CD8-positive, alpha-beta T cell (primary cell): ENCODE measurements at regions of chr19 and their contacts with region 1.

Region 1: DNA sequence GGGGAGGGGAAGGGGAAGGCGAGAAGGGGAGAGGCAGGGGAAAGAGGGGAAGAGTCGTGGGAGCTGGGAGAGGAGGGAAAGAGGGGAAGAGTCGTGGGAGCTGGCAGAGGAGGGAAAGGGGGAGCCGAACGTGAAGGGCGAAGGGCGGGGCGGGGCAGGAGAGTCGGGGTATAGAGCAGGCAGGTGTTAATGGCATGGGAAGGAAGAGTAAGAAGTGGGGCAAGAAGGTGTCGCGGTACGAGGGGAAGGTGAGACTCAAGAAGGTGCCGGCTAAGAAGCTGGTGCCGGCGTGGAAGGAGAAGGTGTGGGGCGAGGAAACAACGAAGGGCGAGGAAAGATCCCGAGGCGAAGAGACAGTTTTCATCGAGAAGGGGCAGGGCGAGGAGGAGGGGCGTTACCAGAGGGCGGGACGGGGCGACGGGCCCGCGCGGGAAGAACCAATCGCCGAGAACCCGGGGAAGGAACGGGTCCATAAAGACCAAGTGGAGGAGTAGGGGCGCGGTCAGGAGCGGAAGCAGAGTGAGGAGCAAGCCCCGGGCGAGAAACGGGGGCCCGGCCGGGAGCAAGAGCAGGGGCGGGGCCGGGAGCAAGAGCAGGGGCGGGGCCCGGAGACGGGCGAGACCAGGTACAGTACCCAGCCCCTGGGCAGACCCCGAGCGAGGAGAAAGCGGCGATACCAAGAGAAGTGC is 463 bp downstream of the CATSPERG start:
- DNase-seq: peak; percentile 85 to 96 (median 95)
- ATAC-seq: peak; percentile 66
- H3K4me3 ChIP-seq: peak overlapping the region; percentile 85 to 94
- H3K4me3 Mint-ChIP-seq: peak overlapping the region; percentile 89
- H3K27ac ChIP-seq: peak overlapping the region; percentile 84 to 95
- H3K27ac Mint-ChIP-seq: peak overlapping the region; percentile 97
- H3K4me1 ChIP-seq: peaks cover 10% of the 10 kb centered on the region
- H3K4me1 Mint-ChIP-seq: peaks cover 17% of the 10 kb centered on the region
- H3K27me3 ChIP-seq: no peaks in the 10 kb centered on the region
- H3K27me3 Mint-ChIP-seq: no peaks in the 10 kb centered on the region
- CTCF ChIP-seq: no peak

Region 2: GRCh38 chr19:38049105-38049649 is 286.9 kb before region 1 on chr19:
- CTCF ChIA-PET with region 1: no interaction called
- POLR2A ChIA-PET with region 1: no interaction called
- intact Hi-C with region 1: loop called (anchors 5 kb)
- DNase-seq: peak in 8 of 9 experiments; percentile 31 to 89 (median 61)
- ATAC-seq: peak; percentile 86
- H3K4me3 ChIP-seq: peak overlapping the region; percentile 29
- H3K4me3 Mint-ChIP-seq: peak overlapping the region; percentile 74
- H3K27ac ChIP-seq: peak overlapping the region; percentile 69 to 90
- H3K27ac Mint-ChIP-seq: peak overlapping the region; percentile 98
- H3K4me1 ChIP-seq: peaks cover 31% of the 10 kb centered on the region
- H3K4me1 Mint-ChIP-seq: peaks cover 53% of the 10 kb centered on the region
- H3K27me3 ChIP-seq: no peaks in the 10 kb centered on the region
- H3K27me3 Mint-ChIP-seq: no peaks in the 10 kb centered on the region
- CTCF ChIP-seq: no peak

Region 3: DNA sequence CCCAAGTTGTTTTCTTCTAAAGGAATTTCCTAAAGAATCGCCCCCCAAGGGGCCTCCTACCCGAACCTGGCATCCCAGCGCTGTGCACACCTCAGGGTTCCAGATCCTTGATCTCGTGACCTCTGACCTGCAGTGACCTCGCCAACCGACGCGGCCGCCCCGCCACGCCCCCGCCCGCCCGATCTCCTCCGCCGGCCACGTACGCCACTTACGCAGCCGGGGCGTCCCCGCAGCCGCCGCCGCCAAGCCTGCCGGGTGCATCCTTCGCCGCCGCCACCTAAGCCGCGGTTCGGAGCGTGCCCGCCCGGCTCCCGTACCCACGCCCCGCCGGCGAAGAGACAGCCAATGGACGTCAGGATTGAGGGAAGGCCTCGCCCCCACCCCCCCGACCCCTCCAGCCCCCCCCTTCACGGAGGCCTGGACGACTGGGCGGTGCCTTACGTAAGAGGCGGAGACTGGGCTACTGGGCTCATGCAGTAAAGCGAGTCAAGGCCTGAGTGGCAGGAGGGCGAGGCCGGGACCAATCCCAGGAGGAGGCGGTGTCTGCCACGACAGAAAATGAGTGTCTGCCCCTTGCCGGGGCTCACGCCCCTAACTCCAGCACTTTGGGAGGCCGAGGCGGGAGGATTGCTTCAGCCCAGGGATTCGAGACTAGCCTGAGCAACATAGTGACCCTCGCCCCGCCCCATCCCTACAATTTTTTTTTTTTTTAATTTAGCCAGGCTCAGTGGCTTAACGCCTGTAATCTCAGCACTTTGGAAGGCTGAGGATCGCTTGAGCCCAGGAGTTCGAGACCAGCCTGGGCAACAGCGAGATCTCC is 20.2 kb before region 1 on chr19 and contains the start of gene YIF1B:
- CTCF ChIA-PET with region 1: interaction called, 7 read pairs
- POLR2A ChIA-PET with region 1: no interaction called
- intact Hi-C with region 1: loop called (anchors 1 kb)
- DNase-seq: peak; percentile 91 to 98 (median 94)
- ATAC-seq: peak; percentile 92
- H3K4me3 ChIP-seq: peak within 1 kb of the TSS; percentile 60 to 68
- H3K4me3 Mint-ChIP-seq: peak within 1 kb of the TSS; percentile 86
- H3K27ac ChIP-seq: peak within 1 kb of the TSS; percentile 93 to 95
- H3K27ac Mint-ChIP-seq: peak within 1 kb of the TSS; percentile 95
- H3K4me1 ChIP-seq: peaks cover 34% of the 10 kb centered on the region
- H3K4me1 Mint-ChIP-seq: peaks cover 52% of the 10 kb centered on the region
- H3K27me3 ChIP-seq: peaks cover 0 to 2% of the 10 kb centered on the region in 2 experiments
- H3K27me3 Mint-ChIP-seq: no peaks in the 10 kb centered on the region
- CTCF ChIP-seq: no peak
- total RNA-seq, gene YIF1B: 12.0 to 13.0 TPM

Region 4: DNA sequence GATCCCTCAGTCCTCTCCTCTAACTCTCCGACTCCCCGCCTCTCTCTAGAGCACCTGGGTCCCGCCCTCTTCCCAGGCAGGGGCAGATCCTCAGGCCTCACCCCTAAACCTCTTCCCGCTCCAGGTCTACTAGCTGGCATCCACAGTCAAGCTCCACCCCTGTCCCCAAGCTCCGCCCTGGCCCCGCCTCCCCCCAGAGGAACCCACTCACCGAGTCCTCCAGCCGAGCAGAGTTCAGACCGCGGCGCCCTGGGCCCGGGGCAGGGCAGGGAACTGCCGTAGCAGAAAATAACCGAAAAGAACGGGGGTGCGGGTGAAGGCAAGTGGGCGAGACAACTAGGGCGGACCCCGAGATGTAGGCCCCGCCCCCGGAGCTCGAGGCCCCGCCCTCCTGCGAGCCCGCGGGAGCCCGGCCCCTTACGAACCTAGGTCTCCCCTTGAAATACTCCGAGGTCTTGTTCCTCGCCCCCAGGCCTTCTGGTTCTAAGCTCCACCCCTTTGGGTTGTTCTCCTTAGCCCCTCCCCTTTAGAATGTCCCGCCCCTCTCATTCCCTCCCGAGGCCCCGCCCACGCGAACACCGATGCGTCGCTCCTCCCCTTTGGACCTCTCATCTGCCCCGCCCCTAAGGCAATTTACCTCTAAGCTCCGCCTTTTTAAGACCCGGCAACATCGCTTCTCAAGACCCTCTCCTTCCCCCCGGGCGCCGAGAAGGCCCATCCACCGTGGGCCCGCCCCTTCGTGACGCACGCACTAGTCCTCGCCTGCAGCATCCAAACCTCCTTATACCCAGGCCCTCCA is 51.7 kb after region 1 on chr19 and contains the start of gene GGN:
- CTCF ChIA-PET with region 1: interaction called, 3 read pairs
- POLR2A ChIA-PET with region 1: no interaction called
- intact Hi-C with region 1: loop called in 1 of 2 experiments (anchors 5 kb)
- DNase-seq: peak; percentile 54 to 87 (median 76)
- ATAC-seq: peak; percentile 70
- H3K4me3 ChIP-seq: peak within 1 kb of the TSS; percentile 55 to 68
- H3K4me3 Mint-ChIP-seq: peak within 1 kb of the TSS; percentile 87
- H3K27ac ChIP-seq: no peak within 1 kb of the TSS
- H3K27ac Mint-ChIP-seq: peak within 1 kb of the TSS; percentile 82
- H3K4me1 ChIP-seq: peaks cover 36% of the 10 kb centered on the region
- H3K4me1 Mint-ChIP-seq: peaks cover 19% of the 10 kb centered on the region
- H3K27me3 ChIP-seq: peaks cover 4 to 13% of the 10 kb centered on the region in 2 experiments
- H3K27me3 Mint-ChIP-seq: peaks cover 29% of the 10 kb centered on the region
- CTCF ChIP-seq: no peak
- total RNA-seq, gene GGN: 0.67 TPM in 1 of 2 experiments, not detected in the other

Region 5: DNA sequence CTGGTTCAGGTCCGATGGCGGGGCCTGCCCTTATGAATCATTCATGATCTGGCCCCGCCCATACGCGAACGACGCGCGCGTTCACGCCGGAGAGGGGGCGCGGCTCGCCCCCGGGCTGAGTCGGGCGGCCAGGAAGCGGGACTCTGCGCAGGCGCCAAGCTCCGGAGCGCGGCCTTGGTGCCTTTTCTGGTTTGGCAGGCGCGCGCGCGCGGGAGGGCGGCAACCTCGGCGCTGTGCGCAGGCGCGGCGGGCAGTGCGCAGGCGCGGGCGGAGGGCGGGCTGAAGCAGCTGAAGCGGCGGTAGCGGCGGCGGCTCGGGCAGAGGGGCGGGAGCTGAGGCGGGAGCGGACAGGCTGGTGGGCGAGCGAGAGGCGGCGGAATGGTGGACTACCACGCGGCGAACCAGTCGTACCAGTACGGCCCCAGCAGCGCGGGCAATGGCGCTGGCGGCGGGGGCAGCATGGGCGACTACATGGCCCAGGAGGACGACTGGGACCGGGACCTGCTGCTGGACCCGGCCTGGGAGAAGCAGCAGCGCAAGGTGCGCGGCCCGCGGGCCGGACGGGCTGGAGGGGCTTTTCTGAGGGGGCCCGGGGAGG is 311.4 kb after region 1 on chr19 and contains the start of gene ACTN4:
- CTCF ChIA-PET with region 1: no interaction called
- POLR2A ChIA-PET with region 1: no interaction called
- intact Hi-C with region 1: loop called in 1 of 2 experiments (anchors 1 kb)
- DNase-seq: peak; percentile 99 to 100 (median 100)
- ATAC-seq: peak; percentile 94
- H3K4me3 ChIP-seq: peak within 1 kb of the TSS; percentile 83 to 89
- H3K4me3 Mint-ChIP-seq: peak within 1 kb of the TSS; percentile 91
- H3K27ac ChIP-seq: peak within 1 kb of the TSS; percentile 49 to 63
- H3K27ac Mint-ChIP-seq: peak within 1 kb of the TSS; percentile 73
- H3K4me1 ChIP-seq: peaks cover 23% of the 10 kb centered on the region
- H3K4me1 Mint-ChIP-seq: peaks cover 32% of the 10 kb centered on the region
- H3K27me3 ChIP-seq: peaks cover 7 to 16% of the 10 kb centered on the region in 2 experiments
- H3K27me3 Mint-ChIP-seq: peaks cover 31% of the 10 kb centered on the region
- CTCF ChIP-seq: no peak
- total RNA-seq, gene ACTN4: 110 to 111 TPM

Region 6: GRCh38 chr19:39237200-39238184 is 901.4 kb after region 1 on chr19:
- CTCF ChIA-PET with region 1: no interaction called
- POLR2A ChIA-PET with region 1: no interaction called
- intact Hi-C with region 1: no loop called
- DNase-seq: peak in 7 of 9 experiments; percentile 32 to 72 (median 50)
- ATAC-seq: peak; percentile 64
- H3K4me3 ChIP-seq: peak overlapping the region; percentile 31 to 43
- H3K4me3 Mint-ChIP-seq: peak overlapping the region; percentile 78
- H3K27ac ChIP-seq: peak overlapping the region; percentile 50 to 61
- H3K27ac Mint-ChIP-seq: peak overlapping the region; percentile 91
- H3K4me1 ChIP-seq: peaks cover 25% of the 10 kb centered on the region
- H3K4me1 Mint-ChIP-seq: peaks cover 36% of the 10 kb centered on the region
- H3K27me3 ChIP-seq: no peaks in the 10 kb centered on the region
- H3K27me3 Mint-ChIP-seq: no peaks in the 10 kb centered on the region
- CTCF ChIP-seq: no peak